ENCODE measurements at regions of chr14 and their contacts with region 1.

Region 1: GRCh38 chr14:21525962-21526671 is at the start of gene SALL2:
- DNase-seq: peak; percentile 21
- ATAC-seq: peak; percentile 86
- H3K4me3 ChIP-seq: peak within 1 kb of the TSS; percentile 73
- H3K27ac ChIP-seq: peak within 1 kb of the TSS; percentile 31; the same call in 1 of the 2 replicates
- H3K4me1 ChIP-seq: peaks cover 12% of the 10 kb centered on the region
- H3K27me3 ChIP-seq: no peaks in the 10 kb centered on the region
- CTCF ChIP-seq: no peak
- EP300 ChIP-seq: no peak
- POLR2A ChIP-seq: peak; percentile 53
- RAD21 ChIP-seq: no peak
- polyA plus RNA-seq, gene SALL2: 1.9 to 2.3 TPM

Region 2: GRCh38 chr14:21505012-21505553 is 21.0 kb before region 1 on chr14:
- CTCF ChIA-PET with region 1: interaction called, 20 read pairs
- POLR2A ChIA-PET with region 1: interaction called, 35 read pairs
- RAD21 ChIA-PET with region 1: interaction called, 11 read pairs
- SMC1A ChIA-PET with region 1: interaction called, 48 read pairs
- in situ Hi-C with region 1: no loop called
- intact Hi-C with region 1: no loop called
- DNase-seq: peak; percentile 46
- ATAC-seq: peak; percentile 85
- H3K4me3 ChIP-seq: peak overlapping the region; percentile 33; the same call in 1 of the 2 replicates
- H3K27ac ChIP-seq: peak overlapping the region; percentile 54
- H3K4me1 ChIP-seq: peaks cover 10% of the 10 kb centered on the region
- H3K27me3 ChIP-seq: no peaks in the 10 kb centered on the region
- CTCF ChIP-seq: no peak
- EP300 ChIP-seq: no peak
- POLR2A ChIP-seq: no peak
- RAD21 ChIP-seq: no peak

Region 3: GRCh38 chr14:21510735-21511657 is 15.1 kb before region 1 on chr14 and contains the start of gene METTL3:
- CTCF ChIA-PET with region 1: interaction called, 4 read pairs
- POLR2A ChIA-PET with region 1: interaction called, 35 read pairs
- RAD21 ChIA-PET with region 1: interaction called, 20 read pairs
- SMC1A ChIA-PET with region 1: interaction called, 48 read pairs
- in situ Hi-C with region 1: no loop called
- intact Hi-C with region 1: no loop called
- DNase-seq: peak; percentile 97
- ATAC-seq: peak; percentile 98
- H3K4me3 ChIP-seq: peak within 1 kb of the TSS; percentile 94
- H3K27ac ChIP-seq: peak within 1 kb of the TSS; percentile 82
- H3K4me1 ChIP-seq: no peaks in the 10 kb centered on the region; the same call in 1 of the 2 replicates
- H3K27me3 ChIP-seq: no peaks in the 10 kb centered on the region
- CTCF ChIP-seq: no peak
- EP300 ChIP-seq: no peak
- POLR2A ChIP-seq: peak; percentile 87
- RAD21 ChIP-seq: no peak
- polyA plus RNA-seq, gene METTL3: 32.8 to 36.0 TPM

Region 4: DNA sequence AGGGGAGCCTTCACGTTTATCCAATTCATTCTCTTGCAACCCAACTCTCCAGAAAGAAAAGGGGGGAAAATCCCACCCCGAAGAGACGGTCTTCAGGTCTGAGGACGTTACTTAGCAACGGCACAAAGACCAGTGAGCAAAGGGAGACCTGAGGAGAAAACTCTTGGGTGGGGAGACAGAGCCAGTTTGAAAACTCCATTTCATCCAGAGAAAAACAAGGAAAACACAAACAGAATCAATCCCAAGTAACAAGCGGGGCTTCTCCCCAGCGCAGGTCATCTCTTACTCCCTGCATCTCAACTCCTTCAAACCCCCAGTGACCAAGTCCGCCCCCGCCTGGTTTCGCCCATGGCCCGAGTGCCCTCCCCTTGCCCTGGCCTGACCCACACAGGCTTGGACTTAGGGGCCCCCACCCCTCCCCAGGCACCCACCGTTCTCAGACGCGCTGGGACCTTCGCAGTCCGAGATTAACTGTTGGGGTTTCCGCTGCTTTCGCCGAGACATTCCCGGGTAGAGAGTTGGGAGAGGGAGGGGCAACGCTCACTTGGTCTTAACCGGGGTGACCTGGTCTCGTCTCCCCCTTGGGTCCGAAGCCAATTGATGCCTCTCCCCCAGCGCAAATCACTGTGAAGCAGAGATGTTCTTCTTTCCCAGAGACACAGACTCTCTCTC is 10.4 kb after region 1 on chr14:
- CTCF ChIA-PET with region 1: interaction called, 10 read pairs
- POLR2A ChIA-PET with region 1: interaction called, 7 read pairs
- RAD21 ChIA-PET with region 1: interaction called, 6 read pairs
- SMC1A ChIA-PET with region 1: interaction called, 10 read pairs
- in situ Hi-C with region 1: no loop called
- intact Hi-C with region 1: no loop called
- DNase-seq: no peak
- ATAC-seq: peak; percentile 64
- H3K4me3 ChIP-seq: no peak overlapping the region
- H3K27ac ChIP-seq: no peak overlapping the region
- H3K4me1 ChIP-seq: no peaks in the 10 kb centered on the region
- H3K27me3 ChIP-seq: peaks cover 5 to 7% of the 10 kb centered on the region in 2 experiments
- CTCF ChIP-seq: no peak
- EP300 ChIP-seq: no peak
- POLR2A ChIP-seq: no peak
- RAD21 ChIP-seq: no peak

Region 5: GRCh38 chr14:21557084-21557901 is 31.2 kb after region 1 on chr14:
- CTCF ChIA-PET with region 1: interaction called, 14 read pairs
- POLR2A ChIA-PET with region 1: no interaction called
- RAD21 ChIA-PET with region 1: interaction called, 10 read pairs
- SMC1A ChIA-PET with region 1: interaction called, 5 read pairs
- in situ Hi-C with region 1: no loop called
- intact Hi-C with region 1: no loop called
- DNase-seq: peak; percentile 61
- ATAC-seq: peak; percentile 87
- H3K4me3 ChIP-seq: peak overlapping the region; percentile 4; the same call in 1 of the 2 replicates
- H3K27ac ChIP-seq: no peak overlapping the region
- H3K4me1 ChIP-seq: no peaks in the 10 kb centered on the region
- H3K27me3 ChIP-seq: no peaks in the 10 kb centered on the region
- CTCF ChIP-seq: peak; percentile 48 to 74 (median 69)
- EP300 ChIP-seq: no peak
- POLR2A ChIP-seq: no peak
- RAD21 ChIP-seq: peak; percentile 92

Region 6: DNA sequence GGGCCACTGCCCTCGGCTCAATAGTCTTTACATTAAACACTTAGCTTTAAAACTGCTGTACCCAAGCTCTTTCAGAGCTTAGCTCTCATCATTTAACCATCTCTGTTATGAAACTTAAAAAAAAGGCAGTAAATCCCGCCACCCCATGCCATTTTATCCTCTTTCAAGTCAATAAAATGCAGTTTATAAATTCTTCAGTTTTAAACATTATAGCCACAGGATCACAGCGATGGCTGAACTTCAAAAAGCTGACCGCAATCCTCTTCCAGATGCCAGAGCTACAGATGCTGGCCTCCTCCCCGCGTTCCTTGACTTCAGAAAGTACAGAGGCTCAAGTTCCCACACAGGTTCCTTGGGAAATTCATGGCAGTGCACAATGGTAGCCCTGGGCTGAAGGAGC is 49.5 kb after region 1 on chr14:
- CTCF ChIA-PET with region 1: no interaction called
- POLR2A ChIA-PET with region 1: no interaction called
- RAD21 ChIA-PET with region 1: no interaction called
- SMC1A ChIA-PET with region 1: no interaction called
- in situ Hi-C with region 1: no loop called
- intact Hi-C with region 1: no loop called
- DNase-seq: no peak
- ATAC-seq: no peak
- H3K4me3 ChIP-seq: no peak overlapping the region
- H3K27ac ChIP-seq: no peak overlapping the region
- H3K4me1 ChIP-seq: no peaks in the 10 kb centered on the region
- H3K27me3 ChIP-seq: no peaks in the 10 kb centered on the region
- CTCF ChIP-seq: no peak
- EP300 ChIP-seq: no peak
- POLR2A ChIP-seq: no peak
- RAD21 ChIP-seq: no peak

Region 7: GRCh38 chr14:21612324-21612723 is 86.2 kb after region 1 on chr14:
- CTCF ChIA-PET with region 1: no interaction called
- POLR2A ChIA-PET with region 1: no interaction called
- RAD21 ChIA-PET with region 1: no interaction called
- SMC1A ChIA-PET with region 1: no interaction called
- in situ Hi-C with region 1: no loop called
- intact Hi-C with region 1: no loop called
- DNase-seq: peak; percentile 3
- ATAC-seq: peak; percentile 84
- H3K4me3 ChIP-seq: no peak overlapping the region
- H3K27ac ChIP-seq: no peak overlapping the region
- H3K4me1 ChIP-seq: no peaks in the 10 kb centered on the region
- H3K27me3 ChIP-seq: no peaks in the 10 kb centered on the region
- CTCF ChIP-seq: peak in 1 of 3 experiments; percentile 35; a peak in 2 of 6 replicates
- EP300 ChIP-seq: 0 out of 4 replicates have a peak, but pooled peaks of 1 of the 2 experiments have one; percentile 33
- POLR2A ChIP-seq: no peak
- RAD21 ChIP-seq: peak; percentile 27; the same call in 1 of the 2 replicates

Measured in GM12878 (cell line).